ENCODE measurements at regions of chr12 and their contacts with region 1.

Region 1: DNA sequence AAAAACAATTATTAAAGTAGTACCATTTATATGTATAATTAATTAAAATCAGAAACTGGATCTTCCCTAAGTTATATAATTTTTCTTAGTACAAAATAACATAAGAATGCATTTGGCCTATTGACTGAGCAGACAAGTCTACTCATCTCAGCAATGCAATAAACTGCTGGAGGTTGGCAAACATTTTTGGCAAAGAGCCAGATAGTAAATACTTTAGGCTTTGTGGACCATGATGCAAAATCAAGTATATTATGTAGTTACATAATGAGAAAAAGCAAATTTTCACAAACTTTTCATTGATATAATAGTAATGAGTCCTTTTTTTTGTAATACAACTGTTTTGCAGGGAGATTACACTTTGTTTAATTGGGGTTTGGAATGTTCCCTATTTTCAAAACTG is 30.9 kb downstream of the ERGIC2 start:
- DNase-seq: peak; percentile 64
- H3K4me3 ChIP-seq: no peak overlapping the region
- H3K27ac ChIP-seq: no peak overlapping the region
- H3K4me1 ChIP-seq: peaks cover 16% of the 10 kb centered on the region
- H3K27me3 ChIP-seq: no peaks in the 10 kb centered on the region

Region 2: GRCh38 chr12:29255042-29255441 is 95.0 kb before region 1 on chr12:
- in situ Hi-C with region 1: loop called (anchors 25 kb)
- DNase-seq: no peak
- H3K4me3 ChIP-seq: no peak overlapping the region
- H3K27ac ChIP-seq: no peak overlapping the region
- H3K4me1 ChIP-seq: no peaks in the 10 kb centered on the region
- H3K27me3 ChIP-seq: no peaks in the 10 kb centered on the region

Measured in GM23248 (cell line).